ENCODE measurements at regions of chr18 and their contacts with region 1.

Region 1: GRCh38 chr18:49858309-49859020 is 45.1 kb upstream of the ACAA2 start:
- DNase-seq: peak; percentile 73
- H3K4me3 Mint-ChIP-seq: no peak overlapping the region
- H3K27ac Mint-ChIP-seq: no peak overlapping the region
- H3K4me1 Mint-ChIP-seq: no peaks in the 10 kb centered on the region
- H3K27me3 Mint-ChIP-seq: no peaks in the 10 kb centered on the region

Region 2: DNA sequence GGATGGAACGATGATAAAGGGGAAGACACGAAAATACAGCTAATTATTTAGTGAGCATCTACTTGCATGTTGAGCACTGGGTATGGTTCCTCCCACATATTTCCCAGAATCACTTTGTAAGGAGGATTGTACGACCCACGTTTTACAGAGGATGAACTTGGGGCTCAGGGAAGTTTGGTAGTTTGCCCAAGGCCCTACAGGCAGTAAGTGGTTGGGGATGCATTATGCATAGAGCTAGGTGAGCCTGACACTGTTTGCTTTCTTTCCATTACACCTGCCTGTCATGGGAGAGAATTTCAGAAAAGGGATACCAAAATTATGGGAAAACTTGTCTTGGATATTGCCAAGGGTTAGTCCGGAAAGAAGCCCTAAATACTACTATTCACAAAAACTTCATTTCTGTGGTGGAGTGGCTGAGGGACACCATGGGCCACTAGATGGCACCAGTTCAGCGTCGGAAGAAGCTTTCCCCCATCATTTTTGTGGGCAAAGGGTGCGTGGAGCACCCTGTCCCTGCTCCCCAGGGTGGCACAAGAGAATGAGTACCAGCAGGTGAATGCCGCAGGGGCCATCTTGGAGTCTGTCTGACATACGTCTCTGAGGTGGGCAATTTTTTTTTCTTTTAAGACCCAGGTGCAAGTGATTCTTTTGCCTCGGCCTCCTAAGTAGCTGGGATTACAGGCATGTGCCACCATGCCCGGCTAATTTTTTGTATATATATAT is 347.9 kb before region 1 on chr18:
- CTCF ChIA-PET with region 1: interaction called, 202 read pairs
- POLR2A ChIA-PET with region 1: no interaction called
- intact Hi-C with region 1: loop called (anchors 1 kb)
- DNase-seq: peak; percentile 61
- H3K4me3 Mint-ChIP-seq: no peak overlapping the region
- H3K27ac Mint-ChIP-seq: no peak overlapping the region
- H3K4me1 Mint-ChIP-seq: no peaks in the 10 kb centered on the region
- H3K27me3 Mint-ChIP-seq: peaks cover 13% of the 10 kb centered on the region

Region 3: GRCh38 chr18:49555641-49556040 is 302.8 kb before region 1 on chr18:
- CTCF ChIA-PET with region 1: interaction called, 67 read pairs
- POLR2A ChIA-PET with region 1: no interaction called
- intact Hi-C with region 1: loop called (anchors 1 kb)
- DNase-seq: no peak
- H3K4me3 Mint-ChIP-seq: no peak overlapping the region
- H3K27ac Mint-ChIP-seq: no peak overlapping the region
- H3K4me1 Mint-ChIP-seq: peaks cover 4% of the 10 kb centered on the region
- H3K27me3 Mint-ChIP-seq: peaks cover 33% of the 10 kb centered on the region

Region 4: DNA sequence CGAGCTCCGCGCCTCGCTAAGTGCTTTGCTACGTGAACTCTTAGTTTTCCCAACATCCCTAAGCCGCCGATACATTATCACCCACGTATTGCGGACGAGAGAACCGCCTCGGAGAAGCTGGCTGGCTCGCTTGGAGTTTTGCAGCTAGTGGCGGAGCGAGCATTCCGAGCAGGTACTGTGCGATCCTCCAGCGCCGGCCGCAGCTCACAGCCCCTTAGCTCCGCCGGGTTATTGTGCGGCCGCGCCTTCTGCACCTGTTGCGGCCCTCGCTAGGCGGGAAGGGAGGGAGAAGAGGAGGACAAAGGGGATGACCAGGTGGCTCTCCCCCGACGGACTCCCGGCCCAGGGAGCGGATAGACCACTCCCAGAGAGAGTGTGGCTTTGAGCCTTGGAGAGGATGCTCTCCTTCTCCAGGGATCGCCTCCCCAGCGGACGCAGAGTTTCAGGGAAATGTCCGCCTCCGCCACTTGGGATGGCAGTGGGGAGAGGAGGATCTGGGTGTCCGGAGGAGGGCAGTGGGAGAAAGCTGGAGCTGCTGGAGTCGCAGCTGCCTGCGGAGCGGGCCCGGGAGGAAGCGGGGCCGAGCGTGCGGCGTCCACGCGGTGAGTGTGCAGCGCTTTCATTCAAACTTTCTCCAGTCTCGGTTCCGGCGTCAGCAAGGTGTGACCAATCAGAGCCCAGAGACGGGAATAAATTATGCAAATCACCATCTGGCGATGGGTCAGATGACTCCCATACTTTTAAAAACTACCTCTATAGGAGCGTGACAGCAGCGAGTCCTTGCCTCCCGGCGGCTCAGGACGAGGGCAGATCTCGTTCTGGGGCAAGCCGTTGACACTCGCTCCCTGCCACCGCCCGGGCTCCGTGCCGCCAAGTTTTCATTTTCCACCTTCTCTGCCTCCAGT is 296.9 kb before region 1 on chr18 and contains the start of gene LIPG:
- CTCF ChIA-PET with region 1: interaction called, 67 read pairs
- POLR2A ChIA-PET with region 1: no interaction called
- intact Hi-C with region 1: loop called (anchors 1 kb)
- DNase-seq: peak; percentile 77
- H3K4me3 Mint-ChIP-seq: peak within 1 kb of the TSS; percentile 54
- H3K27ac Mint-ChIP-seq: no peak within 1 kb of the TSS
- H3K4me1 Mint-ChIP-seq: peaks cover 31% of the 10 kb centered on the region
- H3K27me3 Mint-ChIP-seq: peaks cover 62% of the 10 kb centered on the region
- total RNA-seq, gene LIPG: 0.17 to 0.50 TPM

Region 5: GRCh38 chr18:49742316-49743116 is 115.9 kb before region 1 on chr18:
- CTCF ChIA-PET with region 1: no interaction called
- POLR2A ChIA-PET with region 1: no interaction called
- intact Hi-C with region 1: no loop called
- DNase-seq: no peak
- H3K4me3 Mint-ChIP-seq: no peak overlapping the region
- H3K27ac Mint-ChIP-seq: no peak overlapping the region
- H3K4me1 Mint-ChIP-seq: no peaks in the 10 kb centered on the region
- H3K27me3 Mint-ChIP-seq: peaks cover 6% of the 10 kb centered on the region

Region 6: GRCh38 chr18:49869354-49869753 is 10.9 kb after region 1 on chr18:
- CTCF ChIA-PET with region 1: interaction called, 11 read pairs
- POLR2A ChIA-PET with region 1: no interaction called
- intact Hi-C with region 1: no loop called
- DNase-seq: no peak
- H3K4me3 Mint-ChIP-seq: no peak overlapping the region
- H3K27ac Mint-ChIP-seq: no peak overlapping the region
- H3K4me1 Mint-ChIP-seq: no peaks in the 10 kb centered on the region
- H3K27me3 Mint-ChIP-seq: peaks cover 3% of the 10 kb centered on the region

Measured in activated CD4-positive, alpha-beta memory T cell treated with anti-CD3 and anti-CD28 coated beads for 36 hours (primary cell).